Heart left ventricle (tissue), 16 donors: ENCODE measurements at regions of chr1 and their contacts with region 1.

Region 1: GRCh38 chr1:178093205-178093957 is 523 bp upstream of the RASAL2 start:
- DNase-seq: peak; percentile 94 to 96 (median 96)
- ATAC-seq: peak; percentile 84 to 93 (median 92)
- H3K4me3 ChIP-seq: peak overlapping the region; percentile 71 to 98 (median 92)
- H3K27ac ChIP-seq: peak overlapping the region; percentile 82 to 96 (median 94)
- H3K4me1 ChIP-seq: peaks cover 2 to 45% (median 29%) of the 10 kb centered on the region in 12 donors
- H3K27me3 ChIP-seq: peaks cover 0 to 4% (median 0%) of the 10 kb centered on the region in 9 donors
- CTCF ChIP-seq: no peak
- POLR2A ChIP-seq: peak in 1 of 2 donors; percentile 28

Region 2: GRCh38 chr1:178055779-178056471 is 37.5 kb before region 1 on chr1:
- intact Hi-C with region 1: loop called in 9 of 10 experiments (anchors 1 to 5 kb)
- DNase-seq: peak in 2 of 5 donors; percentile 42 to 61
- ATAC-seq: peak; percentile 38 to 65 (median 62)
- H3K4me3 ChIP-seq: no peak overlapping the region
- H3K27ac ChIP-seq: peak overlapping the region; percentile 77 to 96 (median 84)
- H3K4me1 ChIP-seq: peaks cover 19 to 88% (median 64%) of the 10 kb centered on the region in 12 donors
- H3K27me3 ChIP-seq: no peaks in the 10 kb centered on the region
- CTCF ChIP-seq: peak in 10 of 12 donors; percentile 5 to 52 (median 25)
- POLR2A ChIP-seq: no peak

Region 3: DNA sequence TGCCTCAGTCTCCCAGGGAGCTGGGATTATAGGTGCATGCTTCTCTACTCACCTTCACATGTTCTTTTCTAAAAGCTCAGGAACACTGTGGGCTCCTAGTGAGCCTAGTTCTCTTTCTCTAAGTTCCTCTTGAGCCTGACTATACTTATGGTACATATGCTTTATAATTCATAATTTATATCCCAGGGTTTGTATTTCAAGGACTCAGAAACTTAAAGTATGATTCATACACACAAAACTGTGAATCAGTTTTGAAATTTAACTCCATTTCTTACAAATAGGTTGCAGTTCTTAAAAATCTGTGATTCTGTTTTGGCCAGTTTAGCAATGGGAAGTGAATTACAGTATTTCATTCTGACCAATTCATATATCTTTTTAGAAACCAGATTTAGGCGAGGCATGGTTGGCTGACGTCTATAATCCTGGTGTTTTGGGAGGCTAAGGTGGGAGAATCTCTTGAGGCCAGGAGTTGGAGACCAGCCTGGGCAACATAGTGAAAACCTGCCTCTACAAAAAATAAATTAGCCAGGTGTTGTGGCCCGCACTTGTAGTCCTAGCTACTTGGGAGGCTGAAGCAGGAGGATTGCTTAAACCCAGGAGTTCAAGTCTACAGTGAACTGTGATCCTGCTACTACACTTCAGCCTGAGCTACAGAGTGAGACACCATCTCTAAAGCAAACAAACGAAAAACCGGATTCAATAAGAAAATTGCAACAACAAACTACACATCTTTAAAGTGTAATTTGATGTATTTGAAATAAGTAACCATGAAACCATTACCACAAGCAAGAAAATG is 16.2 kb after region 1 on chr1:
- intact Hi-C with region 1: no loop called
- DNase-seq: no peak
- ATAC-seq: no peak
- H3K4me3 ChIP-seq: no peak overlapping the region
- H3K27ac ChIP-seq: no peak overlapping the region
- H3K4me1 ChIP-seq: peaks cover 0 to 45% (median 23%) of the 10 kb centered on the region in 12 donors
- H3K27me3 ChIP-seq: no peaks in the 10 kb centered on the region
- CTCF ChIP-seq: no peak
- POLR2A ChIP-seq: no peak

Region 4: GRCh38 chr1:178172954-178173353 is 79.6 kb after region 1 on chr1:
- intact Hi-C with region 1: loop called in 1 of 10 experiments (anchors 10 kb)
- DNase-seq: no peak
- ATAC-seq: no peak
- H3K4me3 ChIP-seq: no peak overlapping the region
- H3K27ac ChIP-seq: no peak overlapping the region
- H3K4me1 ChIP-seq: peaks cover 0 to 58% (median 26%) of the 10 kb centered on the region in 12 donors
- H3K27me3 ChIP-seq: no peaks in the 10 kb centered on the region
- CTCF ChIP-seq: no peak
- POLR2A ChIP-seq: no peak

Region 5: GRCh38 chr1:178267646-178268094 is 174.3 kb after region 1 on chr1:
- intact Hi-C with region 1: loop called in 1 of 10 experiments (anchors 2 kb)
- DNase-seq: no peak
- ATAC-seq: peak in 2 of 4 donors; percentile 62 to 75
- H3K4me3 ChIP-seq: no peak overlapping the region
- H3K27ac ChIP-seq: peak overlapping the region in 4 of 12 donors; percentile 9 to 55 (median 29)
- H3K4me1 ChIP-seq: peaks cover 0 to 46% (median 27%) of the 10 kb centered on the region in 12 donors
- H3K27me3 ChIP-seq: no peaks in the 10 kb centered on the region
- CTCF ChIP-seq: no peak
- POLR2A ChIP-seq: no peak

Region 6: GRCh38 chr1:178664278-178664677 is 570.9 kb after region 1 on chr1:
- intact Hi-C with region 1: no loop called
- DNase-seq: no peak
- ATAC-seq: no peak
- H3K4me3 ChIP-seq: no peak overlapping the region
- H3K27ac ChIP-seq: no peak overlapping the region
- H3K4me1 ChIP-seq: no peaks in the 10 kb centered on the region
- H3K27me3 ChIP-seq: no peaks in the 10 kb centered on the region
- CTCF ChIP-seq: no peak
- POLR2A ChIP-seq: no peak